ENCODE measurements at regions of chr19 and their contacts with region 1.

Region 1: GRCh38 chr19:23395041-23395721 is at the start of gene ZNF91:
- DNase-seq: peak; percentile 94
- ATAC-seq: peak; percentile 95
- H3K4me3 Mint-ChIP-seq: peak within 1 kb of the TSS; percentile 97
- H3K27ac Mint-ChIP-seq: peak within 1 kb of the TSS; percentile 99
- H3K4me1 Mint-ChIP-seq: peaks cover 23% of the 10 kb centered on the region
- H3K27me3 Mint-ChIP-seq: no peaks in the 10 kb centered on the region
- CTCF ChIP-seq: no peak
- total RNA-seq, gene ZNF91: 36.5 to 40.4 TPM (median 40.3 TPM) in 3 replicates

Region 2: GRCh38 chr19:23328211-23328610 is 67.0 kb before region 1 on chr19:
- CTCF ChIA-PET with region 1: no interaction called
- POLR2A ChIA-PET with region 1: no interaction called
- DNase-seq: no peak
- ATAC-seq: no peak
- H3K4me3 Mint-ChIP-seq: no peak overlapping the region
- H3K27ac Mint-ChIP-seq: no peak overlapping the region
- H3K4me1 Mint-ChIP-seq: peaks cover 9% of the 10 kb centered on the region; the same call in 1 of the 2 replicates
- H3K27me3 Mint-ChIP-seq: peaks cover 16% of the 10 kb centered on the region
- CTCF ChIP-seq: no peak

Region 3: GRCh38 chr19:23345838-23346237 is 49.3 kb before region 1 on chr19:
- CTCF ChIA-PET with region 1: no interaction called
- POLR2A ChIA-PET with region 1: no interaction called
- DNase-seq: peak; percentile 65
- ATAC-seq: peak; percentile 97
- H3K4me3 Mint-ChIP-seq: no peak overlapping the region
- H3K27ac Mint-ChIP-seq: no peak overlapping the region
- H3K4me1 Mint-ChIP-seq: peaks cover 9% of the 10 kb centered on the region
- H3K27me3 Mint-ChIP-seq: no peaks in the 10 kb centered on the region
- CTCF ChIP-seq: peak; percentile 40

Region 4: GRCh38 chr19:23415561-23416191 is 20.5 kb after region 1 on chr19:
- CTCF ChIA-PET with region 1: interaction called, 5 read pairs
- POLR2A ChIA-PET with region 1: interaction called, 49 read pairs
- DNase-seq: peak; percentile 90
- ATAC-seq: peak; percentile 94
- H3K4me3 Mint-ChIP-seq: peak overlapping the region; percentile 92
- H3K27ac Mint-ChIP-seq: peak overlapping the region; percentile 90
- H3K4me1 Mint-ChIP-seq: peaks cover 21% of the 10 kb centered on the region
- H3K27me3 Mint-ChIP-seq: peaks cover 7% of the 10 kb centered on the region; the same call in 1 of the 2 replicates
- CTCF ChIP-seq: no peak

Region 5: DNA sequence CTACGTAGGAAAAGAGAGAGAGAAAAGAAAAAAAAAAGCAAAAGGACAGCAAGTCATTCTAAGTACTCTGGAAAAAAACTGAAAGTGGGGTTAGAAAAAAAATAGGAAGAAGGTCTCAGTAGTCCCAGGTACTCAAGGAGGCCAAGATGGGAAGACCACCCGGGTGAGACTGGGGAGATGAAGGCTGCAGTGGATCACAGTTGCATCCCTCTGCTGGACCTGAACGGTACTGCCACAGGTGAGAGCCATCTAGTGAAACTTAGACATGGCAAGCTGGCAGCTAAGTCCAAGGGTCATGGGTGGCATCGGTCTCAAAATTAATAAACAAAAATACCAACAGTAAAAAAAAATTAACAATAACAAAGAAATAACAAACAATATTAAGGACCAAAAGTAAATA is 41.1 kb after region 1 on chr19:
- CTCF ChIA-PET with region 1: no interaction called
- POLR2A ChIA-PET with region 1: no interaction called
- DNase-seq: peak; percentile 35
- ATAC-seq: 0 out of 2 replicates have a peak, but pooled peaks have one; percentile 43
- H3K4me3 Mint-ChIP-seq: no peak overlapping the region
- H3K27ac Mint-ChIP-seq: no peak overlapping the region
- H3K4me1 Mint-ChIP-seq: no peaks in the 10 kb centered on the region
- H3K27me3 Mint-ChIP-seq: peaks cover 4% of the 10 kb centered on the region; the same call in 1 of the 2 replicates
- CTCF ChIP-seq: peak; percentile 23; the same call in 1 of the 2 replicates

Measured in WTC11 (cell line).